Activated CD4-positive, alpha-beta memory T cell treated with anti-CD3 and anti-CD28 coated beads for 36 hours (primary cell): ENCODE measurements at regions of chr3 and their contacts with region 1.

Region 1: GRCh38 chr3:108489771-108490170 is 20.6 kb downstream of the MYH15 start:
- DNase-seq: peak; percentile 12
- H3K4me3 Mint-ChIP-seq: no peak overlapping the region
- H3K27ac Mint-ChIP-seq: no peak overlapping the region
- H3K4me1 Mint-ChIP-seq: peaks cover 4% of the 10 kb centered on the region
- H3K27me3 Mint-ChIP-seq: no peaks in the 10 kb centered on the region

Region 2: GRCh38 chr3:108477511-108478147 is 12.1 kb before region 1 on chr3:
- CTCF ChIA-PET with region 1: interaction called, 32 read pairs
- POLR2A ChIA-PET with region 1: no interaction called
- intact Hi-C with region 1: no loop called
- DNase-seq: peak; percentile 67
- H3K4me3 Mint-ChIP-seq: no peak overlapping the region
- H3K27ac Mint-ChIP-seq: no peak overlapping the region
- H3K4me1 Mint-ChIP-seq: peaks cover 3% of the 10 kb centered on the region
- H3K27me3 Mint-ChIP-seq: peaks cover 1% of the 10 kb centered on the region

Region 3: GRCh38 chr3:108552267-108553159 is 62.7 kb after region 1 on chr3:
- CTCF ChIA-PET with region 1: interaction called, 73 read pairs
- POLR2A ChIA-PET with region 1: no interaction called
- intact Hi-C with region 1: loop called (anchors 1 kb)
- DNase-seq: no peak
- H3K4me3 Mint-ChIP-seq: no peak overlapping the region
- H3K27ac Mint-ChIP-seq: no peak overlapping the region
- H3K4me1 Mint-ChIP-seq: peaks cover 8% of the 10 kb centered on the region
- H3K27me3 Mint-ChIP-seq: no peaks in the 10 kb centered on the region

Region 4: GRCh38 chr3:108662130-108662738 is 172.5 kb after region 1 on chr3:
- CTCF ChIA-PET with region 1: no interaction called
- POLR2A ChIA-PET with region 1: no interaction called
- intact Hi-C with region 1: loop called (anchors 1 kb)
- DNase-seq: peak; percentile 40
- H3K4me3 Mint-ChIP-seq: no peak overlapping the region
- H3K27ac Mint-ChIP-seq: no peak overlapping the region
- H3K4me1 Mint-ChIP-seq: peaks cover 11% of the 10 kb centered on the region
- H3K27me3 Mint-ChIP-seq: no peaks in the 10 kb centered on the region

Region 5: GRCh38 chr3:108818404-108818803 is 328.6 kb after region 1 on chr3:
- CTCF ChIA-PET with region 1: interaction called, 3 read pairs
- POLR2A ChIA-PET with region 1: no interaction called
- intact Hi-C with region 1: loop called (anchors 1 kb)
- DNase-seq: peak; percentile 77
- H3K4me3 Mint-ChIP-seq: peak overlapping the region; percentile 35
- H3K27ac Mint-ChIP-seq: peak overlapping the region; percentile 59
- H3K4me1 Mint-ChIP-seq: peaks cover 29% of the 10 kb centered on the region
- H3K27me3 Mint-ChIP-seq: no peaks in the 10 kb centered on the region

Region 6: DNA sequence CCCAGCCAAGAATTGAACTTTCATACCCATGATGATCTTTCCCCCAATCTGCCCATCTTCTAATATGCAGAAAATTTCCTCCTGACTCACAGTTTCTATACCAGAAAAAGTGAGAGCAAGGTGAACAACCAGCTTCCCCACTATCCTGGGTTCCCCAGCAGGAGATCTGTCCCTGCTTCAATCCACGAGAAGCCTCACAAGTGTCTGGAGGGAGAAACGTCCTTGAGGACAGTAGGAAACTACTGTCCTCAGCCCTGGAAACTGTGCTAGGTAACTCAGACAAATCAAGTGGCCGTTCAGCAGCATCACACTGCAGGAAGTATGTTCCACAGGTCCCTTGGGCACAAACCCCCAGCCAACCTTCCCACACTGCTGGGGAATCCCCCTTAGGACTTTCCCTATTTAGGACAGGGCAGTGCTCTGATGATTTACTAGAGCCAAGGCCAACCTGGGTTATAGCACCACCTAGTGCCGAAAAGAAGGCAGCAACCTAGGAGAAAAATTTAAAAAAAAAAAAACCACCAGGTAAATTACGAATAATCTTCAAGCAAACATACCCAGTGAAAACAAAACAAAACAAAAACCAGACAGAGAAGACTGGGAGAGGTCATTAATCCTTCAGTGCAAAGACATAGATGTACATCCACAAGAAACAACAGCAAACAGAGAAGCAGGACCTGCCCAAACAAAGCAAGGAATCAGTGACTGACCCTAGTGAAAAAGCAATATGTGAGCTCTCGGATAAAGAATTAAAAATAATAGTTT is 592.2 kb after region 1 on chr3:
- CTCF ChIA-PET with region 1: interaction called, 3 read pairs
- POLR2A ChIA-PET with region 1: no interaction called
- intact Hi-C with region 1: loop called (anchors 5 kb)
- DNase-seq: peak; percentile 43
- H3K4me3 Mint-ChIP-seq: no peak overlapping the region
- H3K27ac Mint-ChIP-seq: no peak overlapping the region
- H3K4me1 Mint-ChIP-seq: peaks cover 5% of the 10 kb centered on the region
- H3K27me3 Mint-ChIP-seq: peaks cover 12% of the 10 kb centered on the region